AG04450 (cell line): ENCODE measurements at regions of chr12 and their contacts with region 1.

Region 1: DNA sequence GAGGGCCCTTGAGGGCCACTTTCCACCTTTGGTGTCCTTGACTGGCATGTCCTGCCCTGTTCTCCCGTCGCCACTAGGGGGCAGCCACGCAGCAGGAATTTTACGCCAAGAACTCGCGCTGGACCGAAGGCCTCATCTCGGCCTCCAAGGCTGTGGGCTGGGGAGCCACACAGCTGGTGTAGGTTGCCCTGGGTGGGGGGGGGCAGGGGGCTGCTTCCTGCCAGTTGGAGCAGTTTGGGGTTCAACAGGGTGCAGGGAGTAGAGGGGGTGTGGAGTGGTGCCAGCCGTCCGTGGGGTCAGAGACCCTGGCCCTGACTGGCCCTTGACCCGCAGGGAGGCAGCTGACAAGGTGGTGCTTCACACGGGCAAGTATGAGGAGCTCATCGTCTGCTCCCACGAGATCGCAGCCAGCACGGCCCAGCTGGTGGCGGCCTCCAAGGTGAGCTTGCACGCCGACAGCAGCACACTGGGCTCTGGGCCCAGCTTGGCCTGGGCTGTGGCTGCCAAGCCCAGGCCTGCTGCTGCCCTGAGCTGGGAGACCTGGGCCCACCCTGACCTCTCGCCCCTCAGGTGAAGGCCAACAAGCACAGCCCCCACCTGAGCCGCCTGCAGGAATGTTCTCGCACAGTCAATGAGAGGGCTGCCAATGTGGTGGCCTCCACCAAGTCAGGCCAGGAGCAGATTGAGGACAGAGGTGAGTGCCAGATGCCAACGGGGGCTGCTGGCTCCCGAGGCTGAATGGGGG is 25.3 kb downstream of the HIP1R start:
- DNase-seq: peak; percentile 46
- H3K4me3 ChIP-seq: no peak overlapping the region
- H3K27ac ChIP-seq: no peak overlapping the region
- H3K27me3 ChIP-seq: no peaks in the 10 kb centered on the region
- CTCF ChIP-seq: peak; percentile 89

Region 2: GRCh38 chr12:122880668-122881067 is 20.1 kb after region 1 on chr12:
- CTCF ChIA-PET with region 1: interaction called, 13 read pairs
- POLR2A ChIA-PET with region 1: no interaction called
- DNase-seq: no peak
- H3K4me3 ChIP-seq: no peak overlapping the region
- H3K27ac ChIP-seq: no peak overlapping the region
- H3K27me3 ChIP-seq: no peaks in the 10 kb centered on the region
- CTCF ChIP-seq: peak; percentile 40

Region 3: GRCh38 chr12:122951979-122952892 is 91.7 kb after region 1 on chr12:
- CTCF ChIA-PET with region 1: interaction called, 35 read pairs
- POLR2A ChIA-PET with region 1: interaction called, 3 read pairs
- DNase-seq: no peak
- H3K4me3 ChIP-seq: no peak overlapping the region
- H3K27ac ChIP-seq: no peak overlapping the region
- H3K27me3 ChIP-seq: no peaks in the 10 kb centered on the region
- CTCF ChIP-seq: peak; percentile 87

Region 4: GRCh38 chr12:123167329-123167728 is 306.8 kb after region 1 on chr12:
- CTCF ChIA-PET with region 1: no interaction called
- POLR2A ChIA-PET with region 1: no interaction called
- DNase-seq: no peak
- H3K4me3 ChIP-seq: no peak overlapping the region
- H3K27ac ChIP-seq: no peak overlapping the region
- H3K27me3 ChIP-seq: no peaks in the 10 kb centered on the region
- CTCF ChIP-seq: no peak